ENCODE measurements at regions of chr20 and their contacts with region 1.

Region 1: GRCh38 chr20:37365760-37366638 is 20.1 kb downstream of the SRC start:
- DNase-seq: no peak
- ATAC-seq: peak; percentile 88
- H3K4me3 Mint-ChIP-seq: peak overlapping the region; percentile 49
- H3K27ac Mint-ChIP-seq: peak overlapping the region; percentile 80
- H3K4me1 Mint-ChIP-seq: peaks cover 45% of the 10 kb centered on the region
- H3K27me3 Mint-ChIP-seq: no peaks in the 10 kb centered on the region
- CTCF ChIP-seq: no peak

Region 2: GRCh38 chr20:36847009-36847709 is 518.8 kb before region 1 on chr20:
- CTCF ChIA-PET with region 1: no interaction called
- POLR2A ChIA-PET with region 1: no interaction called
- intact Hi-C with region 1: no loop called
- DNase-seq: no peak
- ATAC-seq: no peak
- H3K4me3 Mint-ChIP-seq: peak overlapping the region; percentile 74
- H3K27ac Mint-ChIP-seq: peak overlapping the region; percentile 95
- H3K4me1 Mint-ChIP-seq: peaks cover 91% of the 10 kb centered on the region
- H3K27me3 Mint-ChIP-seq: no peaks in the 10 kb centered on the region
- CTCF ChIP-seq: no peak

Region 3: GRCh38 chr20:36984257-36984638 is 381.8 kb before region 1 on chr20:
- CTCF ChIA-PET with region 1: no interaction called
- POLR2A ChIA-PET with region 1: no interaction called
- intact Hi-C with region 1: no loop called
- DNase-seq: no peak
- ATAC-seq: peak; percentile 40
- H3K4me3 Mint-ChIP-seq: no peak overlapping the region
- H3K27ac Mint-ChIP-seq: no peak overlapping the region
- H3K4me1 Mint-ChIP-seq: peaks cover 19% of the 10 kb centered on the region
- H3K27me3 Mint-ChIP-seq: no peaks in the 10 kb centered on the region
- CTCF ChIP-seq: no peak

Region 4: GRCh38 chr20:37202267-37202943 is 163.6 kb before region 1 on chr20:
- CTCF ChIA-PET with region 1: interaction called, 4 read pairs
- POLR2A ChIA-PET with region 1: no interaction called
- intact Hi-C with region 1: loop called (anchors 1 kb)
- DNase-seq: no peak
- ATAC-seq: no peak
- H3K4me3 Mint-ChIP-seq: no peak overlapping the region
- H3K27ac Mint-ChIP-seq: no peak overlapping the region
- H3K4me1 Mint-ChIP-seq: no peaks in the 10 kb centered on the region
- H3K27me3 Mint-ChIP-seq: no peaks in the 10 kb centered on the region
- CTCF ChIP-seq: peak; percentile 66

Region 5: GRCh38 chr20:37294262-37294981 is 71.6 kb before region 1 on chr20:
- CTCF ChIA-PET with region 1: no interaction called
- POLR2A ChIA-PET with region 1: interaction called, 4 read pairs
- intact Hi-C with region 1: loop called (anchors 1 kb)
- DNase-seq: no peak
- ATAC-seq: no peak
- H3K4me3 Mint-ChIP-seq: no peak overlapping the region
- H3K27ac Mint-ChIP-seq: peak overlapping the region; percentile 15
- H3K4me1 Mint-ChIP-seq: peaks cover 62% of the 10 kb centered on the region
- H3K27me3 Mint-ChIP-seq: no peaks in the 10 kb centered on the region
- CTCF ChIP-seq: no peak

Region 6: DNA sequence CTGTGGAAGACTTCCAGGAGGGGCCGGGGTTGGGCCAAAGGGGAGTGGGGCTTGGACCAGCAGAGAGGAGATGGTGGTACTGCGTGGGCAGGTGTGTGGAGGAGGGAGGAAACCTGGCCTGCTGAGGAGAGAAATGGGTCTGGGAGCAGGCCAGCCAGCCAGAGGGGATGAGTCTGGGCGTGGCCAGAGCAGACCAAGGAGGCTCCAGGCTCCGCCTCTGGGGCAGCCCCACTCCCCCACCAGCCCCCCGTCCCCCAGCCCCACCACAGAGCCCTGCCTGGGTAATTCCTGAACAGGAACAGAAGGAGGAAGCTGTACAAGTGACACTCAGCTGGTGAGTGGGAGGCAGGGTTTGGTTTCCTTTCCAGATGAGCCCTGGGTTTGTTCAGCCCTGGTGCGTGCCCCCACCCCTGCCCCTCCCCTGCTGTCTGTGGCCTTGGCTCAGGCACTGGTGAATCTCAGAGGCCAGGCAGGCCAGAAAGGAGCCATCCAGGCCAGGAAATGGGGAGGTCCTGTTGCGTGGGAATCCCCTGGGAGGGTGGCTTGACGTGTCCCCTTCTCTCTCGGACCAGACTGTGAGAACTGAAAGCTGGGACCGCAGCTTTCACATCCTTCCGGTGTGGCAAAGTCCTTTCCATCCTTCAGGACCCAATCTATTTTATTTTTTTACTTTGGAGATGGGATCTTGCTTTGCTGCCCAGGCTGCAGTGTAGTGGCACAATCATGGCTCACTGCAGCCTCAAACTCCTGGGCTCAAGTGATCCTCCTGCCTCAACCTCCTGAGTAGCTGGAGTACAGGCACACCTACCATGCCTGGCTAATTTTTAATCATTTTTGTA is 29.4 kb before region 1 on chr20:
- CTCF ChIA-PET with region 1: no interaction called
- POLR2A ChIA-PET with region 1: interaction called, 6 read pairs
- intact Hi-C with region 1: loop called (anchors 1 kb)
- DNase-seq: peak; percentile 50
- ATAC-seq: peak; percentile 74
- H3K4me3 Mint-ChIP-seq: peak overlapping the region; percentile 65
- H3K27ac Mint-ChIP-seq: peak overlapping the region; percentile 92
- H3K4me1 Mint-ChIP-seq: peaks cover 52% of the 10 kb centered on the region
- H3K27me3 Mint-ChIP-seq: no peaks in the 10 kb centered on the region
- CTCF ChIP-seq: no peak

Region 7: GRCh38 chr20:37378785-37379598 is 13.0 kb after region 1 on chr20:
- CTCF ChIA-PET with region 1: interaction called, 6 read pairs
- POLR2A ChIA-PET with region 1: interaction called, 21 read pairs
- intact Hi-C with region 1: loop called (anchors 1 kb)
- DNase-seq: no peak
- ATAC-seq: no peak
- H3K4me3 Mint-ChIP-seq: no peak overlapping the region
- H3K27ac Mint-ChIP-seq: no peak overlapping the region
- H3K4me1 Mint-ChIP-seq: peaks cover 62% of the 10 kb centered on the region
- H3K27me3 Mint-ChIP-seq: no peaks in the 10 kb centered on the region
- CTCF ChIP-seq: no peak

Region 8: DNA sequence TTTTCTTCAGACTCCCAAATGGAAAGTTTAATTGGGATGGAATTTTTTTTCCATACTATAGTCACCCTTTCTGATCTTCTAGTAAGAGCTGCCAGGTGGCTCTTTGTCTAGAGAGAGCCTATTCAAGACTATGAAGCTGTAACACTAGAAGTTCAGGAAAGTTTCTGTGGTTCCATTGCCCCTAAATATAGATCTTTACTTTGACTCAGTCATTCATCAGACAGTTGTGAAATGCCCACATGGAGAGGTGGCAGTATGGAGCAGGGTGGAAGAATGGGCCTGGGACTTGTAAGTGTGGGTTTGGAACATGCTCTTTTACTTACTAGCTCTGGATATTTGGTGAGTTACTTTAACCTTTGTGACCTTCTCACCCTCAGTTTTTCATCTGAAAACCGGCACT is 415.6 kb after region 1 on chr20:
- CTCF ChIA-PET with region 1: no interaction called
- POLR2A ChIA-PET with region 1: no interaction called
- intact Hi-C with region 1: no loop called
- DNase-seq: no peak
- ATAC-seq: no peak
- H3K4me3 Mint-ChIP-seq: no peak overlapping the region
- H3K27ac Mint-ChIP-seq: no peak overlapping the region
- H3K4me1 Mint-ChIP-seq: peaks cover 36% of the 10 kb centered on the region
- H3K27me3 Mint-ChIP-seq: no peaks in the 10 kb centered on the region
- CTCF ChIP-seq: no peak